ENCODE measurements at regions of chr9 and their contacts with region 1.

Region 1: DNA sequence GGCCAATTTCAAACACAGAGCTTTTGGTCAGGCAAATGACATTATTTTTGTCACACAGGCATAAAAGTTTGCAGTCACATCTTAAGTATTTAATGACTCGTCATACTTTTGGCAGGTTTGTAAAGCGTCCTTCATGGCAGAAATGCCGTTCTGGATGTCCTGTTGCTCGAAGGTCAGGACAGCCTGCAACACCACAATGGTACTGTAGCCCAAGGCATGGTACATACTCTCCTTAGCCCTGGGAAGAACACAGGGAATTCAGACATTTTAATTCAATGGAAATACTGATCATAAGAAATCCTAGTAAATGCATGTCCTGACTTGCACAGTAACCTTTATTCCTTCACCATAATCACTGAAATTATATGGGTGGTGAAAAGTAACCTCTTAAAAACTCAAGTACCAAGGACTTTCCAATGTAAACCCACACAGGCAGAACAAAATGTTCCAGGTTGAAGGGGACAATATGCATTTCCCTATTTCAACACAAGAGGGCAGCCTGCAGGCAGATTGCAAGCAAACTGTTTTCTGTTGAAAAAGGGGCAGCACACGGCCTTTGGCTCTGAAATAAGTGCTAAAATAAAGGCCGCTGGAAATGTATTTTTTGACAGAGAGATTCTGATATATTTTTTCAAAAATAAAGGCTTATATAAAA is 95.7 kb downstream of the TTC39B start:
- DNase-seq: no peak

Region 2: GRCh38 chr9:15422372-15423230 is 211.3 kb after region 1 on chr9 and contains the start of gene SNAPC3:
- intact Hi-C with region 1: loop called (anchors 10 kb)
- DNase-seq: peak; percentile 98
- total RNA-seq, gene SNAPC3: 31.5 TPM

Region 3: GRCh38 chr9:15606643-15607472 is 395.6 kb after region 1 on chr9:
- intact Hi-C with region 1: loop called (anchors 2 kb)
- DNase-seq: no peak

Measured in cardiac septum (tissue), 1 donor.